Gastrocnemius medialis (tissue), 4 donors: ENCODE measurements at regions of chr6 and their contacts with region 1.

Region 1: DNA sequence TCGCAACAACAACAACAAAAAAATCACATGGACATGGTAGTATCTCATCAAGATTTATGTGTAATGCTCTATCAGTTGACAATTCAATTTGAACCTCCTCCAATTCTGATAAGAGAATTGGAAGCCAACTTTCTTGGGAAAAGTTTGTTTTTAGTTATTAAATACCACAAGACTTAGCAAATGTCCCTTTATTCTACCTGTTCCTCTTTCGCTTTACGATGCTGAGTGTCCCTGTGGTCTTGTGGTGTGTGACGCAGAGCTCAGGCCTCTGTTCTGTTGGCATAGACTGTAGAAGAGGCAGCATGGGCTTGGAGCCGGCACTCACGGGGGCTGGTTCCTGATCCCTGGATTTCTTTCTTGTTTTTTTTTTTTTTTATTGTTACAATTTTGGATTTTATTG is 76.7 kb downstream of the PSMB1 start:
- DNase-seq: no peak
- ATAC-seq: no peak
- H3K4me3 ChIP-seq: no peak overlapping the region
- H3K27ac ChIP-seq: no peak overlapping the region
- H3K4me1 ChIP-seq: peaks cover 5 to 10% of the 10 kb centered on the region in 2 donors
- H3K27me3 ChIP-seq: no peaks in the 10 kb centered on the region
- CTCF ChIP-seq: no peak
- POLR2A ChIP-seq: no peak

Region 2: DNA sequence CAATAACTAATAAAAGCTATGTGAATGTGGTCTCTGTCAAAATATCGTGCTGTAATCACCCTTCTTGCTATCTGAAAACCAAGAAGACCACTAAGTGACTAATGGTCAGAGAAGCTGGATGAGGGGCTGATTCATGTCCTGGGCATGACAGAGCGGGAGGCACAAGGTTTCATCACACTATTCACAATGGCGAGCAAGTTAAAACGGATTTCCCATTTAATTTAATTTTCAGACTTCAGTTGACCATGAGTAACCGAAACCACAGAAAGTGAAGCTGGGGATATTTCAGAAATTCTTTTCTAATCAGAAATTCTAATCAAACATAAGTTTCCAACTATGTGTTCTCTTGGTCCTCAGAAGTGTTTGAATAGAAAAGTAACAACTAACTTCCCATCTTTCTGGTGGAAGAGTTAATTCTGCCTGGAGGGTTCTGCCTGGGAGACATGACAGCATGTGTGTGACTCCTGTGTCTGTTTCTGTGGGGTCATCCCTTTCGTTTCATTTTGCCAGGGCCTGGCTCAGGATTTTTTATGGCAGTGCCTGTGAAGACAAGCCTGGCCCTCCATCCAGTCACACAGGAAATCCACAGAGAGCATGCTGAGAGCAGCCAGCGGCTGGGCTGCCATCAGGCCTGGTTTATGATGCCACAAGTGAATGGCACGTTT is 70.9 kb before region 1 on chr6:
- in situ Hi-C with region 1: no loop called
- intact Hi-C with region 1: loop called (anchors 10 kb)
- DNase-seq: no peak
- ATAC-seq: no peak
- H3K4me3 ChIP-seq: no peak overlapping the region
- H3K27ac ChIP-seq: no peak overlapping the region
- H3K4me1 ChIP-seq: peaks cover 0 to 8% of the 10 kb centered on the region in 2 donors
- H3K27me3 ChIP-seq: no peaks in the 10 kb centered on the region
- CTCF ChIP-seq: no peak
- POLR2A ChIP-seq: no peak

Region 3: DNA sequence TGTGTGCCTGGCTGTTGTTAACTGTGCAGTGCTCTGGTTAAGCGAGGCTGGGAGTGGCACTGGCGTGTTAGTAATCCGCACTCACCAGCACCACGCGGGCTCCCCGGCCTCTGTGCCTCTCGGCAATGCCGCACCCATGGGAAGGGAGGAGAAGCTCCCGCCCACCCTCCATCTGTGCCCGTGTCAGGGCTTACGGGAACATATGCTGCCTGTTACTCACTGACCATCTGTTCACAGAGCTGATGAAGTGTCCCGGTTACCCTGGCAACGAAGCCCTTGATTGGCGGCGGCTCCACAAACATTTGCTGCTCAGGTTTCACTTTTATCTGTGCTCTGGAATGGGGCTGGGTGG is 38.0 kb before region 1 on chr6:
- in situ Hi-C with region 1: no loop called
- intact Hi-C with region 1: no loop called
- DNase-seq: peak; percentile 97 to 98
- ATAC-seq: peak; percentile 80 to 81
- H3K4me3 ChIP-seq: peak overlapping the region; percentile 23 to 38 (median 26)
- H3K27ac ChIP-seq: peak overlapping the region; percentile 84 to 97 (median 92)
- H3K4me1 ChIP-seq: peaks cover 34 to 58% of the 10 kb centered on the region in 2 donors
- H3K27me3 ChIP-seq: no peaks in the 10 kb centered on the region
- CTCF ChIP-seq: no peak
- POLR2A ChIP-seq: peak; percentile 70 to 71

Region 4: GRCh38 chr6:170505306-170505705 is 28.9 kb after region 1 on chr6:
- in situ Hi-C with region 1: no loop called
- intact Hi-C with region 1: no loop called
- DNase-seq: peak; percentile 38 to 45
- ATAC-seq: peak; percentile 49 to 58
- H3K4me3 ChIP-seq: no peak overlapping the region
- H3K27ac ChIP-seq: no peak overlapping the region
- H3K4me1 ChIP-seq: peaks cover 8 to 9% of the 10 kb centered on the region in 2 donors
- H3K27me3 ChIP-seq: no peaks in the 10 kb centered on the region
- CTCF ChIP-seq: no peak
- POLR2A ChIP-seq: no peak

Region 5: DNA sequence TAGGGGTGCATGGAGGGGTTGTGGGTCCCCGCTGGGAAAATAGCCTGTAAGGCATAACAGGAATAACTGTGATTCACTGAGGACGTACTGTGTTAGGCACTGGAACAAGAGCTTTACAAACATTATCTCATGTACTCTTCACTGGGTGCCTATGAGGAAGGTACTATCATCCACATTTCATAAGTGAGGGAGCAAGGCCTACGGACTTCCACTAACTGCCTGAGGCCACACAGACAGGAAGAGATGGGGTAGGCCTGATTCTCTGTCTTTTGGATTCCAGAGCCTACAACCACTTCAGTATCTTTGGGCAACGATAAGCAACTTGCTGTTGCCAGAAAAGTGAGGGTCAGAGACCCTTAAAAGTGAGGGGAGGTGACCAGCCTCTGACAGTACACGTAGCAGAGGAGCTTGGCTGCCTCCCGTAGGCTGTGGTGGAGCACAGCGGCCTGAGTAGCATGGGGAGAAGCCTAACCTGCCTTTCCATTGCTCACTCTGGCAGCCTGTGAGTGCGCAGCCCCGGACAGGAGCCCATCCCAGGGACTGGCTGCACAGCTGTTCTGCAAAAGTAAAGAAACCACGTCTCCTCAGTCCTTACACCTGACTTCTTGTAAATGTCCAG is 46.3 kb after region 1 on chr6:
- in situ Hi-C with region 1: no loop called
- intact Hi-C with region 1: no loop called
- DNase-seq: peak in 1 of 2 donors; percentile 32
- ATAC-seq: peak in 1 of 2 donors; percentile 12
- H3K4me3 ChIP-seq: no peak overlapping the region
- H3K27ac ChIP-seq: peak overlapping the region; percentile 89 to 97 (median 96)
- H3K4me1 ChIP-seq: peaks cover 52 to 55% of the 10 kb centered on the region in 2 donors
- H3K27me3 ChIP-seq: no peaks in the 10 kb centered on the region
- CTCF ChIP-seq: no peak
- POLR2A ChIP-seq: no peak